ENCODE measurements at regions of chr4 and their contacts with region 1.

Region 1: GRCh38 chr4:120066517-120067340 is at the start of gene MAD2L1:
- DNase-seq: peak; percentile 99
- H3K4me3 ChIP-seq: peak within 1 kb of the TSS; percentile 55 to 79 (median 75)
- H3K27ac ChIP-seq: peak within 1 kb of the TSS; percentile 76
- H3K4me1 ChIP-seq: peaks cover 35% of the 10 kb centered on the region
- H3K27me3 ChIP-seq: no peaks in the 10 kb centered on the region
- CTCF ChIP-seq: no peak
- POLR2A ChIP-seq: peak; percentile 94
- total RNA-seq, gene MAD2L1: 35.4 and 41.4 TPM in 2 replicates

Region 2: GRCh38 chr4:119955256-119955655 is 111.5 kb before region 1 on chr4:
- CTCF ChIA-PET with region 1: no interaction called
- POLR2A ChIA-PET with region 1: no interaction called
- dilution Hi-C with region 1: no loop called
- intact Hi-C with region 1: no loop called
- DNase-seq: no peak
- H3K4me3 ChIP-seq: no peak overlapping the region
- H3K27ac ChIP-seq: no peak overlapping the region
- H3K4me1 ChIP-seq: no peaks in the 10 kb centered on the region
- H3K27me3 ChIP-seq: no peaks in the 10 kb centered on the region
- CTCF ChIP-seq: no peak
- POLR2A ChIP-seq: no peak

Region 3: GRCh38 chr4:120085703-120086102 is 19.0 kb after region 1 on chr4:
- CTCF ChIA-PET with region 1: no interaction called
- POLR2A ChIA-PET with region 1: no interaction called
- dilution Hi-C with region 1: no loop called
- intact Hi-C with region 1: no loop called
- DNase-seq: no peak
- H3K4me3 ChIP-seq: no peak overlapping the region
- H3K27ac ChIP-seq: no peak overlapping the region
- H3K4me1 ChIP-seq: no peaks in the 10 kb centered on the region
- H3K27me3 ChIP-seq: no peaks in the 10 kb centered on the region
- CTCF ChIP-seq: no peak
- POLR2A ChIP-seq: no peak

Region 4: GRCh38 chr4:120922381-120923206 is 855.9 kb after region 1 on chr4 and contains the start of gene PRDM5:
- CTCF ChIA-PET with region 1: no interaction called
- POLR2A ChIA-PET with region 1: no interaction called
- dilution Hi-C with region 1: no loop called
- intact Hi-C with region 1: loop called (anchors 1 kb)
- DNase-seq: peak; percentile 52
- H3K4me3 ChIP-seq: peak within 1 kb of the TSS; percentile 10 to 79 (median 68)
- H3K27ac ChIP-seq: peak within 1 kb of the TSS; percentile 49
- H3K4me1 ChIP-seq: peaks cover 5% of the 10 kb centered on the region
- H3K27me3 ChIP-seq: no peaks in the 10 kb centered on the region
- CTCF ChIP-seq: peak in 1 of 2 donors; percentile 34
- POLR2A ChIP-seq: peak; percentile 27
- total RNA-seq, gene PRDM5: 5.7 and 8.1 TPM in 2 replicates

Region 5: GRCh38 chr4:121096629-121097028 is 1029.9 kb after region 1 on chr4:
- CTCF ChIA-PET with region 1: no interaction called
- POLR2A ChIA-PET with region 1: no interaction called
- dilution Hi-C with region 1: no loop called
- intact Hi-C with region 1: loop called (anchors 1 kb)
- DNase-seq: peak; percentile 37
- H3K4me3 ChIP-seq: no peak overlapping the region
- H3K27ac ChIP-seq: no peak overlapping the region
- H3K4me1 ChIP-seq: no peaks in the 10 kb centered on the region
- H3K27me3 ChIP-seq: no peaks in the 10 kb centered on the region
- CTCF ChIP-seq: peak in 1 of 2 donors; percentile 14
- POLR2A ChIP-seq: no peak

Region 6: DNA sequence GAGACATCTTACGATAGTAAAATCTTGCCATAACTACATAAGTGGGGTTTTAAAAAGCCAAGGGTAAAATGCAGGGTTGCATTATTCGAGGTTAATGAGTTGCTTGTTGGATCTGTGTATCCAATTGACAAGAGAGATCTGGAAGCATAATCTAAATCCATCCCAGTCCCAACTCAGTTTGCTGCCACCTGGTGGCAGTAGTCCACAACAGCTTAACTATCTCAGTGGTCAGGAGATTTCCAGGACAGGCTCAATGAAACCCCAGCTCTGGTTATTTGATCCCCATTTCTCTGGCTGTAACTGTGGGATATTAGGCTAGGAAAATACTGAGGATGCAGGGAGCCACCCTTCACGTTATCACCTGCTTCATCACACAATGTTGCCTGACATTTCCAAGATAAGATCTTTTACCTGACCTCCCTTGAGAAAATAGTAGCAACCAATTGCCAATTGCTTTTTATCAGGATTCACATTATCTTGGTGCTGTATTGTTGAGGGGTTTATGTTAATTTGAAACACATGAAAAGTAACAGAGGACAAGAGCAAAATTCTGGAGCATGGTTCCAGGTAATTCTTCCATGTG is 1185.6 kb after region 1 on chr4:
- CTCF ChIA-PET with region 1: interaction called, 3 read pairs
- POLR2A ChIA-PET with region 1: no interaction called
- dilution Hi-C with region 1: no loop called
- intact Hi-C with region 1: loop called (anchors 1 kb)
- DNase-seq: peak; percentile 65
- H3K4me3 ChIP-seq: no peak overlapping the region
- H3K27ac ChIP-seq: no peak overlapping the region
- H3K4me1 ChIP-seq: peaks cover 2% of the 10 kb centered on the region
- H3K27me3 ChIP-seq: peaks cover 0 to 3% of the 10 kb centered on the region in 2 experiments
- CTCF ChIP-seq: peak; percentile 75 to 81
- POLR2A ChIP-seq: no peak

Region 7: GRCh38 chr4:121307445-121308327 is 1241.0 kb after region 1 on chr4:
- CTCF ChIA-PET with region 1: no interaction called
- POLR2A ChIA-PET with region 1: no interaction called
- dilution Hi-C with region 1: no loop called
- intact Hi-C with region 1: loop called (anchors 5 kb)
- DNase-seq: peak; percentile 24
- H3K4me3 ChIP-seq: no peak overlapping the region
- H3K27ac ChIP-seq: no peak overlapping the region
- H3K4me1 ChIP-seq: no peaks in the 10 kb centered on the region
- H3K27me3 ChIP-seq: no peaks in the 10 kb centered on the region
- CTCF ChIP-seq: peak; percentile 38 to 39
- POLR2A ChIP-seq: no peak